CD8-positive, alpha-beta T cell (primary cell): ENCODE measurements at regions of chr11 and their contacts with region 1.

Region 1: DNA sequence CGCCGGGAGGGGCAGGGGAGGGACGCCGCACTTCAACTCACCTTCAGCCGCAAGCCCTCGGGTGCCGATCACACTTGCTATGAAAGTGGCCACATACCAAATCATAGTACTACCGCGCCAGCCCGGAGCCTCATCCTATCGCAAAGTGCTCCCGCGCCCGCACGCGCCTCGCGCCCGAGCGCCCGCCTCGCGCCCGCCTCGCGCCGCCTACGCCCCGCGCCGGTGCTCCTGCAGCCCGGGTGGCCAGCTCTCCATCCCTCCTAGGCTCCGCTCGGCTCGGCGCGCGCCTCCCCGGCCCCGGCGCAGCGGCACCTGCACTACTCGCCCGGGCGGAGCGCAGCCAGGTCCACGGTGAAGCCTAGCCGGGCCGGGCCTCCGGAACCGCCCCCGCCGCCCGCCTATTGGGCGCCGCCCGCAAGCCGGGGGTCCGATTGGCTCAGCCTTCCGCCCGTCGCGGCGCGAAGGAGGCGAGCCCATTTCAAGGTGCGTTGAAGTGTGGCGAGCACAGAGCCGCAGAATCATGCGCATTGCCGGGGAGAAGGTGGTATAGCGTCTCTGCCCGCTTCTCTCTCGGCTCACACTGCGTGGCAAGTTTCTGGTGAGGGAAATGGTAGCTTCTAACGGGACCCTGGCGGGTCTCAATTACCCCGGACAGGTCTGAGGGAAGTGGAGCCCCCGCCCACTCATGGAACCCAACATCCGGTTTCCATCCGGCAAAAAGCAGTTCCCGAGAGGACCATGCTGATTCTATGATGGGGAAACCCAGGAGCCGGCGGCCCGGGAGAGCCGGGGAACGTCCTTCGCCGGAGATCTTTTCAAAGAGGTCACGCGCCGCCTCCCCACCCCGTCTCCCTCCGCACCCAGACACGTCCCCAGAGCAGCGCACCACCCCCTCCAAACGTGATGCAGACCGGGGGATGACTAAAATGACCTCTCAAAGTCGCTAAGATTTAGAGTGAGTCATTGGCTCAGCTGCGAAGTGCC is at the start of gene IGSF9B:
- DNase-seq: peak; percentile 82 to 95 (median 90)
- ATAC-seq: peak; percentile 93
- H3K4me3 ChIP-seq: peak within 1 kb of the TSS; percentile 67 to 81
- H3K4me3 Mint-ChIP-seq: peak within 1 kb of the TSS; percentile 90
- H3K27ac ChIP-seq: peak within 1 kb of the TSS; percentile 62 to 64
- H3K27ac Mint-ChIP-seq: peak within 1 kb of the TSS; percentile 86
- H3K4me1 ChIP-seq: peaks cover 29% of the 10 kb centered on the region
- H3K4me1 Mint-ChIP-seq: peaks cover 40% of the 10 kb centered on the region
- H3K27me3 ChIP-seq: peaks cover 0 to 7% of the 10 kb centered on the region in 2 experiments
- H3K27me3 Mint-ChIP-seq: peaks cover 8% of the 10 kb centered on the region
- CTCF ChIP-seq: no peak
- total RNA-seq, gene IGSF9B: 10.1 to 11.6 TPM

Region 2: DNA sequence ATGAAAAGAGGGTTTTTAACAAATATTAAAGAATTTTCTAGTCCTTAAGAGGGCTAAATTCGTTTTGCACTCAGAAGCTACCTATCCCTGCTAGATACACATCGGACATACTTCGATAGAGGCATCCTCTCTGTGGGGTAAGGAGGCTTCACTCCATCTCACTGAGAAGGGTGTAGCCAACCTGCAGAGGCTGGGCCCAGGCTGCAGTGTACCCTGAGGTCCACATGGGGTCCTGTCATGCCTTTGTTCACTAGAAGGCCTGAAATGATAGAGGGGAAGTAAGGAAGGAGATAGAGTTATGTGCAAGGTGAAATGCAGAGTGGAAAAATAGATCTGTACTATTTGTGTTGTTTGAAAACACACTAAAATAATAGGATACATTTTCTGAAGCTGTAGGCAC is 45.8 kb before region 1 on chr11:
- CTCF ChIA-PET with region 1: no interaction called
- POLR2A ChIA-PET with region 1: no interaction called
- intact Hi-C with region 1: no loop called
- DNase-seq: no peak
- ATAC-seq: no peak
- H3K4me3 ChIP-seq: no peak overlapping the region
- H3K4me3 Mint-ChIP-seq: no peak overlapping the region
- H3K27ac ChIP-seq: no peak overlapping the region
- H3K27ac Mint-ChIP-seq: no peak overlapping the region
- H3K4me1 ChIP-seq: no peaks in the 10 kb centered on the region
- H3K4me1 Mint-ChIP-seq: no peaks in the 10 kb centered on the region
- H3K27me3 ChIP-seq: no peaks in the 10 kb centered on the region
- H3K27me3 Mint-ChIP-seq: no peaks in the 10 kb centered on the region
- CTCF ChIP-seq: no peak

Region 3: DNA sequence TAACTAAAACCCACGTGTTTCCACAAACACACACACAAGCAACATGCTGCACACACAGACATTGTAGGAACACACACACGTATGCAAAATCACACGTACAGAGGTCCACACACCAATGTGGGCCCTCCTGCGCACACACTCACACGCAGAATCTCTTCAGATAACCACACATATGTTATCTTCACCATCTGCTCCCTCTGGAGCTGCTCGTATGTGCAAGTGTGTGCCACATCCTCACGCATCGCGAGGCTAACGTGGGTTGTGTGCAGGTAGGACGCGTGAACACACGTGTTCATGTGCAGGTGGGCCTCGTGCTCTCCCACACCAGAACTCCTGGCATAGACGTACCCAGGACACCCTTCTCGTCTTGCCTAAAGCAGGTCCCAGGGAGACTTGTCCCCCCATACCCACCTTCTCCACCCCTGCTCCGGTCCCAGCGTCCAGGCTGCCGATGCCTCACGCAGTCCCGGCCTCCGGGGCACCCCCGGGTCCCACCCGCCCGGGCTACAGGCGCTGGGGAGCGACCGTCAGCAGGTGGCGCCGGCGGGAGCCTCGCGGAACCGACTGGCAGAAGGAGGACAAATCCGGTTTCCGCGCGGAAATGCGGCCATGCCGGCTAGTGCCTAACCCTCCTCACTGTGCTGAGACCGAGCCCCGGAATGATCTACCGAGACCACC is 10.1 kb after region 1 on chr11:
- CTCF ChIA-PET with region 1: interaction called, 3 read pairs
- POLR2A ChIA-PET with region 1: no interaction called
- intact Hi-C with region 1: loop called in 1 of 2 experiments (anchors 1 kb)
- DNase-seq: peak; percentile 47 to 87 (median 74)
- ATAC-seq: peak; percentile 93
- H3K4me3 ChIP-seq: peak overlapping the region; percentile 42 to 55
- H3K4me3 Mint-ChIP-seq: peak overlapping the region; percentile 89
- H3K27ac ChIP-seq: peak overlapping the region in 1 of 2 experiments; percentile 50
- H3K27ac Mint-ChIP-seq: peak overlapping the region; percentile 87
- H3K4me1 ChIP-seq: peaks cover 15% of the 10 kb centered on the region
- H3K4me1 Mint-ChIP-seq: peaks cover 13% of the 10 kb centered on the region
- H3K27me3 ChIP-seq: no peaks in the 10 kb centered on the region
- H3K27me3 Mint-ChIP-seq: no peaks in the 10 kb centered on the region
- CTCF ChIP-seq: peak; percentile 65

Region 4: GRCh38 chr11:134068829-134069425 is 112.0 kb after region 1 on chr11 and contains the start of gene JAM3:
- CTCF ChIA-PET with region 1: no interaction called
- POLR2A ChIA-PET with region 1: no interaction called
- intact Hi-C with region 1: loop called in 1 of 2 experiments (anchors 1 kb)
- DNase-seq: peak; percentile 95 to 99 (median 98)
- ATAC-seq: peak; percentile 91
- H3K4me3 ChIP-seq: peak within 1 kb of the TSS; percentile 52 to 58
- H3K4me3 Mint-ChIP-seq: peak within 1 kb of the TSS; percentile 94
- H3K27ac ChIP-seq: peak within 1 kb of the TSS in 1 of 2 experiments; percentile 50
- H3K27ac Mint-ChIP-seq: peak within 1 kb of the TSS; percentile 87
- H3K4me1 ChIP-seq: peaks cover 6% of the 10 kb centered on the region
- H3K4me1 Mint-ChIP-seq: peaks cover 17% of the 10 kb centered on the region
- H3K27me3 ChIP-seq: no peaks in the 10 kb centered on the region
- H3K27me3 Mint-ChIP-seq: peaks cover 1% of the 10 kb centered on the region
- CTCF ChIP-seq: no peak
- total RNA-seq, gene JAM3: 12.1 to 15.2 TPM